ENCODE measurements at regions of chr11 and their contacts with region 1.

Region 1: GRCh38 chr11:74492974-74493790 is at the start of gene LIPT2:
- DNase-seq: peak; percentile 93 to 99 (median 97)
- ATAC-seq: peak; percentile 95
- H3K4me3 ChIP-seq: peak within 1 kb of the TSS; percentile 54 to 97
- H3K4me3 Mint-ChIP-seq: peak within 1 kb of the TSS; percentile 88
- H3K27ac ChIP-seq: peak within 1 kb of the TSS; percentile 53 to 96
- H3K27ac Mint-ChIP-seq: peak within 1 kb of the TSS; percentile 87
- H3K4me1 ChIP-seq: peaks cover 12% of the 10 kb centered on the region
- H3K4me1 Mint-ChIP-seq: peaks cover 18% of the 10 kb centered on the region
- H3K27me3 ChIP-seq: no peaks in the 10 kb centered on the region
- H3K27me3 Mint-ChIP-seq: no peaks in the 10 kb centered on the region
- CTCF ChIP-seq: no peak
- total RNA-seq, gene LIPT2: 8.7 to 9.4 TPM

Region 2: GRCh38 chr11:72864702-72865655 is 1628.2 kb before region 1 on chr11:
- CTCF ChIA-PET with region 1: no interaction called
- POLR2A ChIA-PET with region 1: no interaction called
- intact Hi-C with region 1: no loop called
- DNase-seq: no peak
- ATAC-seq: no peak
- H3K4me3 ChIP-seq: no peak overlapping the region
- H3K4me3 Mint-ChIP-seq: no peak overlapping the region
- H3K27ac ChIP-seq: no peak overlapping the region
- H3K27ac Mint-ChIP-seq: peak overlapping the region; percentile 2
- H3K4me1 ChIP-seq: no peaks in the 10 kb centered on the region
- H3K4me1 Mint-ChIP-seq: peaks cover 7% of the 10 kb centered on the region
- H3K27me3 ChIP-seq: no peaks in the 10 kb centered on the region
- H3K27me3 Mint-ChIP-seq: no peaks in the 10 kb centered on the region
- CTCF ChIP-seq: no peak

Region 3: DNA sequence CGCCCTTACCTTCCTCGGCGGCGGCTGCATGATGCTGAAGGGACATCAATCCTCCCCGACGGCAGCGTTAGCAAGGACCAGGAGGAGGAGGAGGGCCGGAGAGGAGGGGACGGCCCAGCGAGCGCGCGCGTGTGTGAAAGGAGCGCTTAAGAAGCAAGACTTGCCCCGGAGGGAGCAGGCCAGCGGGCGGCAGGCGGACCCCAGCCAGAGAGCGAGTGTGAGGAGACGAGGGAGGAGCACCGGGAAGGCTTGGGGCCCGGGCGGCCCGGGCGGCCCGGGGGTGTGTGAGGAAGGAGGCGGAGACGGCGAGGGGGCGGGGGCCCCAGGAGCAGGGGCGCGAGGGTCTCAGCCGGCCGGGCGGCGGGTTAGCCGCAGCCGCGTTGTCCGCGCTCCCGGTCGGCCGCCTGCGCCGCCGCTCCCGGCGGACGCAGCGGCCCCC is 1351.3 kb before region 1 on chr11:
- CTCF ChIA-PET with region 1: no interaction called
- POLR2A ChIA-PET with region 1: interaction called, 3 read pairs
- intact Hi-C with region 1: loop called in 1 of 2 experiments (anchors 5 kb)
- DNase-seq: peak in 7 of 9 experiments; percentile 23 to 81 (median 66)
- ATAC-seq: peak; percentile 27
- H3K4me3 ChIP-seq: peak overlapping the region; percentile 97 to 99
- H3K4me3 Mint-ChIP-seq: peak overlapping the region; percentile 98
- H3K27ac ChIP-seq: peak overlapping the region; percentile 83 to 87
- H3K27ac Mint-ChIP-seq: peak overlapping the region; percentile 96
- H3K4me1 ChIP-seq: peaks cover 33% of the 10 kb centered on the region
- H3K4me1 Mint-ChIP-seq: peaks cover 52% of the 10 kb centered on the region
- H3K27me3 ChIP-seq: no peaks in the 10 kb centered on the region
- H3K27me3 Mint-ChIP-seq: no peaks in the 10 kb centered on the region
- CTCF ChIP-seq: no peak

Region 4: DNA sequence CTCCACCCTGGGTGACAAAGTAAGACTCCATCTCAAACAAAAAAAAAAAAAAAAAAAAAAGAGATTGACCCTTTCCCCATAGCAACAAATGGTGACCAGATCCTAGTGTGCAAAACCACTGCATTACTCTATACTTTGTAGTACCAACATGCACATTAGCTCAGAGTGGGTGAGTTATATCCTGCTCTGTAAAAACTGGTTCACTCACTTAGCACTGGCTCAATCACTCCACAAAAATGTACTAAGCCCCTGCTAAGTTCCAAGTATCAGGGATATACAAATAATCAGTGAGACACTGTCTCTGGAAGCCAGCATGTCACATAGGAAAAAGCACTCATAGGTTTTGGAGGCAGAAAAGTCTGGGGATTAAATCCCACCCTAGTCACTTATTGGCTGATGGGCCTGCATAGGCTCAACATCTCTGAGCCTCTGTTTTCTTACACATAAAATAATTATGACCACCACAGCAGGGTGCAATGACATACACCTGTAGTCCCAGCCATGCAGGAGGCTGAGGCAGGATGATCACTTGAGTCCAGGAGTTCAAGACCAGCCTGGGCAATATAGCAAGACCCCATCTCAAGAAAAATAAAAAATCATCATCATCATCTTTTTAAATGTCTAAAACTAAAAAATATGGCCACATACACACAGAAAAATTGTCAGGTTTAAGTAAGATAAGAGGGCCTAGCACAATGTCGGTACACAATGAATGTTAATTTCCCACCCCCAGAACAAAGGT is 907.2 kb before region 1 on chr11:
- CTCF ChIA-PET with region 1: no interaction called
- POLR2A ChIA-PET with region 1: no interaction called
- intact Hi-C with region 1: no loop called
- DNase-seq: no peak
- ATAC-seq: no peak
- H3K4me3 ChIP-seq: no peak overlapping the region
- H3K4me3 Mint-ChIP-seq: no peak overlapping the region
- H3K27ac ChIP-seq: no peak overlapping the region
- H3K27ac Mint-ChIP-seq: no peak overlapping the region
- H3K4me1 ChIP-seq: no peaks in the 10 kb centered on the region
- H3K4me1 Mint-ChIP-seq: peaks cover 16% of the 10 kb centered on the region
- H3K27me3 ChIP-seq: no peaks in the 10 kb centered on the region
- H3K27me3 Mint-ChIP-seq: no peaks in the 10 kb centered on the region
- CTCF ChIP-seq: no peak

Region 5: GRCh38 chr11:74398244-74399159 is 94.7 kb before region 1 on chr11 and contains the start of gene PGM2L1:
- CTCF ChIA-PET with region 1: no interaction called
- POLR2A ChIA-PET with region 1: interaction called, 20 read pairs
- intact Hi-C with region 1: loop called (anchors 1 kb)
- DNase-seq: peak; percentile 85 to 97 (median 95)
- ATAC-seq: peak; percentile 86
- H3K4me3 ChIP-seq: peak within 1 kb of the TSS; percentile 51 to 92
- H3K4me3 Mint-ChIP-seq: peak within 1 kb of the TSS; percentile 99
- H3K27ac ChIP-seq: peak within 1 kb of the TSS; percentile 44 to 58
- H3K27ac Mint-ChIP-seq: peak within 1 kb of the TSS; percentile 96
- H3K4me1 ChIP-seq: peaks cover 10% of the 10 kb centered on the region
- H3K4me1 Mint-ChIP-seq: peaks cover 26% of the 10 kb centered on the region
- H3K27me3 ChIP-seq: no peaks in the 10 kb centered on the region
- H3K27me3 Mint-ChIP-seq: no peaks in the 10 kb centered on the region
- CTCF ChIP-seq: no peak
- total RNA-seq, gene PGM2L1: 5.2 to 5.8 TPM

Region 6: DNA sequence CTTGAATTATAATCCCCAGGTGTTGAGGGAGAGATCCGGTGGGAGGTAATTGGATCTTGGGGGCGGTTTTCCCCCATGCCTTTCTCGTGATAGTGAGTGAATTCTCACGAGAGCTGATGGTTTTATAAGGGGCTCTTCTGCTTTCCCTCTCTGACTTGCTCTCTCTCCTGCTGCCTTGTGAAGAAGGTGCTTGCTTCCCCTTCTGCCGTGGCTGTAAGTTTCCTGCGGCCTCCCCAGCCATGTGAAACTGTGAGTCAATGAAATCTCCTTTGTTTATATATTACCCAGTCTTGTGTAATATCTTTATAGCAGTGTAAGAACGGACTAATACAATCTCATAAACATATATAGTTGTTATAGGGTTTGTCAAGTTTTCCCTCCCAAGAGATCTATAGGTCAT is 58.7 kb before region 1 on chr11:
- CTCF ChIA-PET with region 1: no interaction called
- POLR2A ChIA-PET with region 1: no interaction called
- intact Hi-C with region 1: no loop called
- DNase-seq: no peak
- ATAC-seq: no peak
- H3K4me3 ChIP-seq: no peak overlapping the region
- H3K4me3 Mint-ChIP-seq: no peak overlapping the region
- H3K27ac ChIP-seq: no peak overlapping the region
- H3K27ac Mint-ChIP-seq: no peak overlapping the region
- H3K4me1 ChIP-seq: no peaks in the 10 kb centered on the region
- H3K4me1 Mint-ChIP-seq: no peaks in the 10 kb centered on the region
- H3K27me3 ChIP-seq: no peaks in the 10 kb centered on the region
- H3K27me3 Mint-ChIP-seq: peaks cover 5% of the 10 kb centered on the region
- CTCF ChIP-seq: no peak

Region 7: DNA sequence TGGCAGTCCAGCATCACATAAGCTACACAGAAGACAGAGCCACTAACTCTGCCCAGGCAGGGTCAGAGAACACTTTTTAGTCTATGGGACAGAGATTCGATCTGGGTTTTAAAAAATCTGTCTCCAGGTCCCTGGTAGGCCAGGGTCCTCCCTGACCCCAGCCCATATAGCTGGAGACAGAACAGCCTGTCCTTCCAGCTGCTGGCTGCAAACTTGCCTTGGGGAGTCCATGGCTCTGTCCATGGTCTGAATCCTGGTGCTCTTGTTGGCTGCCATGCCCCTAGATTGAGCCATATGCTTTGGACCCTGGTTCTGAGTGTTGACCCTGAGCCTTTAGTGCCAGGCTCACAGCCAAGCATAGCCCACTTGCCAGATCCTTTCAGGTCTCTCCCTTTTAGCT is 13.6 kb after region 1 on chr11:
- CTCF ChIA-PET with region 1: no interaction called
- POLR2A ChIA-PET with region 1: interaction called, 10 read pairs
- intact Hi-C with region 1: no loop called
- DNase-seq: no peak
- ATAC-seq: no peak
- H3K4me3 ChIP-seq: no peak overlapping the region
- H3K4me3 Mint-ChIP-seq: no peak overlapping the region
- H3K27ac ChIP-seq: no peak overlapping the region
- H3K27ac Mint-ChIP-seq: no peak overlapping the region
- H3K4me1 ChIP-seq: no peaks in the 10 kb centered on the region
- H3K4me1 Mint-ChIP-seq: no peaks in the 10 kb centered on the region
- H3K27me3 ChIP-seq: peaks cover 0 to 4% of the 10 kb centered on the region in 2 experiments
- H3K27me3 Mint-ChIP-seq: peaks cover 2% of the 10 kb centered on the region
- CTCF ChIP-seq: no peak

Region 8: DNA sequence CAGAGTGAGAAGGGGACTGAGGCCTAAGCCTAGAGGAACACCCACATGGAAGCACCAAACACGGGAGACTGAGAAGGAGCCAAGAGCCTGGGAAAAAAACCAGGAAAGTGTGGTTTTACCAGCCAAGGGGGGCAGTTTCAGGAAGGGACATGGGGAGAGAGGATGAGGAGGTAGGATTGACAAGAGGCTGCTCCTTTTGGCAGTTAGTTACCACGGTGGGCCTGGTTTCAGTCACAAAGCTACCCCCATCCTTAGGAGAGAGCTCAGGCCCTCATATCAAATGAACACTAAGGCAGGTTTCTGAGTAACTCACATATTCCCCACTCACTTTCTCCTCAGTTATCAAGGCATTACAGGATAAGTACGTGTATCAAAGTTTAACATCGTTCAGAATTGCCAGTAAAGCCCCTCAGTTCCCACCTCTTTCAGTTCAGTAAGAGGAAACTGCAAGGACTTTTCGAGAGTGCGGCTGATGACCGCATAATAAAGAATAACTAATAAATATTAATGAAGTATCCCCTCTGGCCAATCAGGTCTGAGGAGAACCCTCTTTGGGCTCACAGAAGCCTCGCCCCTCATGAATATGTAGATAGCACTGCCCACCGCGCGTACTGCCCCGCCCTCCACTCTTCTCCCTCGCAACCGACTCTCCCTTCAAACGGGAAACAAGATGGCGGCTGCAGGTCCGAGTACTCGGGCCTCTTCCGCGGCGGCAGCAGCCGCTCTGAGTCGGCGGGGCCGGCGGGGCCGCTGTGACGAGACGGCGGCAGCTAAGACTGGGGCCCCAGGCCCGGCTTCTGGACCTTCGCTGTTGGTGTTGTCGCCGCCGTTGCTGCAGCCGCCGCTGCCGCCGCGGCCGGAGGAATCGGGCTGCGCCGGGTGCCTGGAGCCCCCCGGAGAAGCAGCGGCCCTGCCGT is 255.3 kb after region 1 on chr11 and contains the start of gene RNF169:
- CTCF ChIA-PET with region 1: no interaction called
- POLR2A ChIA-PET with region 1: no interaction called
- intact Hi-C with region 1: loop called (anchors 1 to 5 kb)
- DNase-seq: peak; percentile 81 to 96 (median 89)
- ATAC-seq: peak; percentile 98
- H3K4me3 ChIP-seq: peak within 1 kb of the TSS; percentile 56 to 63
- H3K4me3 Mint-ChIP-seq: peak within 1 kb of the TSS; percentile 90
- H3K27ac ChIP-seq: peak within 1 kb of the TSS; percentile 62 to 78
- H3K27ac Mint-ChIP-seq: peak within 1 kb of the TSS; percentile 90
- H3K4me1 ChIP-seq: peaks cover 23% of the 10 kb centered on the region
- H3K4me1 Mint-ChIP-seq: peaks cover 43% of the 10 kb centered on the region
- H3K27me3 ChIP-seq: no peaks in the 10 kb centered on the region
- H3K27me3 Mint-ChIP-seq: no peaks in the 10 kb centered on the region
- CTCF ChIP-seq: no peak
- total RNA-seq, gene RNF169: 14.1 to 14.8 TPM

Region 9: GRCh38 chr11:76235233-76236091 is 1742.3 kb after region 1 on chr11:
- CTCF ChIA-PET with region 1: no interaction called
- POLR2A ChIA-PET with region 1: no interaction called
- intact Hi-C with region 1: loop called in 1 of 2 experiments (anchors 10 kb)
- DNase-seq: peak; percentile 84 to 96 (median 89)
- ATAC-seq: peak; percentile 84
- H3K4me3 ChIP-seq: peak overlapping the region; percentile 86 to 99
- H3K4me3 Mint-ChIP-seq: peak overlapping the region; percentile 90
- H3K27ac ChIP-seq: peak overlapping the region; percentile 61 to 63
- H3K27ac Mint-ChIP-seq: peak overlapping the region; percentile 89
- H3K4me1 ChIP-seq: peaks cover 47% of the 10 kb centered on the region
- H3K4me1 Mint-ChIP-seq: peaks cover 39% of the 10 kb centered on the region
- H3K27me3 ChIP-seq: no peaks in the 10 kb centered on the region
- H3K27me3 Mint-ChIP-seq: no peaks in the 10 kb centered on the region
- CTCF ChIP-seq: no peak